CD8-positive, alpha-beta T cell (primary cell): ENCODE measurements at regions of chr4 and their contacts with region 1.

Region 1: GRCh38 chr4:107736924-107737448 is 17.0 kb upstream of the PAPSS1 start:
- DNase-seq: peak in 8 of 9 experiments; percentile 22 to 71 (median 46)
- ATAC-seq: peak; percentile 49
- H3K4me3 ChIP-seq: no peak overlapping the region
- H3K4me3 Mint-ChIP-seq: no peak overlapping the region
- H3K27ac ChIP-seq: no peak overlapping the region
- H3K27ac Mint-ChIP-seq: no peak overlapping the region
- H3K4me1 ChIP-seq: no peaks in the 10 kb centered on the region
- H3K4me1 Mint-ChIP-seq: no peaks in the 10 kb centered on the region
- H3K27me3 ChIP-seq: no peaks in the 10 kb centered on the region
- H3K27me3 Mint-ChIP-seq: peaks cover 2% of the 10 kb centered on the region
- CTCF ChIP-seq: peak; percentile 78

Region 2: GRCh38 chr4:106266201-106266600 is 1470.8 kb before region 1 on chr4:
- CTCF ChIA-PET with region 1: no interaction called
- POLR2A ChIA-PET with region 1: no interaction called
- intact Hi-C with region 1: loop called in 1 of 2 experiments (anchors 5 kb)
- DNase-seq: peak in 2 of 9 experiments; percentile 7 to 18
- ATAC-seq: no peak
- H3K4me3 ChIP-seq: no peak overlapping the region
- H3K4me3 Mint-ChIP-seq: no peak overlapping the region
- H3K27ac ChIP-seq: no peak overlapping the region
- H3K27ac Mint-ChIP-seq: no peak overlapping the region
- H3K4me1 ChIP-seq: no peaks in the 10 kb centered on the region
- H3K4me1 Mint-ChIP-seq: peaks cover 6% of the 10 kb centered on the region
- H3K27me3 ChIP-seq: no peaks in the 10 kb centered on the region
- H3K27me3 Mint-ChIP-seq: no peaks in the 10 kb centered on the region
- CTCF ChIP-seq: no peak

Region 3: DNA sequence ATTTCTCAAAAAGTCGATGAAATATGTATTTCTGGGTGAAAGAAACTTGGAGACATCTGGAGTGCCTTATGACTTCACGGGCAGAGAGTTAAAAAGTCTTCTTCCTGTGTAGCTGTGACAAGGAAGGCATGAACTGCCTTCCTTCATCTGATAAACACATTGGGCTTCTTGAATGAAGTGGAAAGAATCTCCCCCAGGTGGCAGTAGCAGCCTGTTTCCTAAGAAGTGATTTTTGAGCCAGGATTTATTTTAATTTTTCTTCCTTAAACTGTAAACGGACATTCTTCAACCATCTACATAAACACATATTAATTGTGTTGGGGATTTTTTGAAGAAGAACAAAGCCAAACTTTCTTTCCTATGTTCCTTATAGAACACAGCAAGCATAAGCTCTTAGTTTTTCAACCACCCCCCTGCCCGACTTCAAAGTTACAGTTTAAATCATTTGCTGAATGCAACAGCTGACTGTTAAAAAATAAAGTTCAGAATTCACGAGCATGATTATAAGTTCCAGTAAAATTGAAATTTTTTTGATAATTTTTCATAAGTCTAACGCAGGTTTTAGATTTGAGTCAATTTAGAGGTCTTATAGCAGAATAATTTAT is 1367.4 kb before region 1 on chr4:
- CTCF ChIA-PET with region 1: no interaction called
- POLR2A ChIA-PET with region 1: no interaction called
- intact Hi-C with region 1: loop called in 1 of 2 experiments (anchors 5 kb)
- DNase-seq: peak in 2 of 9 experiments; percentile 16 to 33
- ATAC-seq: no peak
- H3K4me3 ChIP-seq: no peak overlapping the region
- H3K4me3 Mint-ChIP-seq: no peak overlapping the region
- H3K27ac ChIP-seq: no peak overlapping the region
- H3K27ac Mint-ChIP-seq: no peak overlapping the region
- H3K4me1 ChIP-seq: no peaks in the 10 kb centered on the region
- H3K4me1 Mint-ChIP-seq: no peaks in the 10 kb centered on the region
- H3K27me3 ChIP-seq: no peaks in the 10 kb centered on the region
- H3K27me3 Mint-ChIP-seq: peaks cover 14% of the 10 kb centered on the region
- CTCF ChIP-seq: peak; percentile 27

Region 4: DNA sequence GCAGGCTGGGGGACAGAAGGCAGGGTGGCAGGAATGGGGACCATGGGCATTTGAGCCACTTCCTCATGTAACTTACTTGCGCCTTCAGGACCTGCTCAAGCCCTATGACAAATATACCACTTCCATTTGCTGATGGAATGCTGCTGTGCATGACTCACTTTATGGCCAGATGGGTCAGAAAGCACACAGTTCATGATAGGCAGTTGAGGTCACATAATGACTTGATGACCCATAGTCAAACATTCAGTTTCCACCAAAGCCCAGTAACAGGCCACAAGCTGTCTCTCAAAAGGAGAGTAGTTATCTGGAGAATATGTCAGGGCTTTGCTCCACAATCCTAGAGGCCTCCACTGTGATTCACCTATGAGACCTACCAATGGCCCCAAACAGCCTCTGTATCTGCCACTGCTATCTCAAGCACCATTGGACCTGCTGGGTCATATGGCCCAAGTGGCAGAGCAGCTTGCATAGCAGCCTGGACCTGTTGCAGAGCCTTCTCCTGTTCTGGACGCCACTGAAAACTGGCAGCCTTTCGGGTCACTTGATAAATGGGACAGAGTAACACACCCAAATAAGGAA is 11.6 kb before region 1 on chr4:
- CTCF ChIA-PET with region 1: interaction called, 15 read pairs
- POLR2A ChIA-PET with region 1: no interaction called
- intact Hi-C with region 1: loop called in 1 of 2 experiments (anchors 1 kb)
- DNase-seq: no peak
- ATAC-seq: no peak
- H3K4me3 ChIP-seq: no peak overlapping the region
- H3K4me3 Mint-ChIP-seq: no peak overlapping the region
- H3K27ac ChIP-seq: no peak overlapping the region
- H3K27ac Mint-ChIP-seq: no peak overlapping the region
- H3K4me1 ChIP-seq: peaks cover 5% of the 10 kb centered on the region
- H3K4me1 Mint-ChIP-seq: peaks cover 12% of the 10 kb centered on the region
- H3K27me3 ChIP-seq: no peaks in the 10 kb centered on the region
- H3K27me3 Mint-ChIP-seq: peaks cover 5% of the 10 kb centered on the region
- CTCF ChIP-seq: no peak

Region 5: DNA sequence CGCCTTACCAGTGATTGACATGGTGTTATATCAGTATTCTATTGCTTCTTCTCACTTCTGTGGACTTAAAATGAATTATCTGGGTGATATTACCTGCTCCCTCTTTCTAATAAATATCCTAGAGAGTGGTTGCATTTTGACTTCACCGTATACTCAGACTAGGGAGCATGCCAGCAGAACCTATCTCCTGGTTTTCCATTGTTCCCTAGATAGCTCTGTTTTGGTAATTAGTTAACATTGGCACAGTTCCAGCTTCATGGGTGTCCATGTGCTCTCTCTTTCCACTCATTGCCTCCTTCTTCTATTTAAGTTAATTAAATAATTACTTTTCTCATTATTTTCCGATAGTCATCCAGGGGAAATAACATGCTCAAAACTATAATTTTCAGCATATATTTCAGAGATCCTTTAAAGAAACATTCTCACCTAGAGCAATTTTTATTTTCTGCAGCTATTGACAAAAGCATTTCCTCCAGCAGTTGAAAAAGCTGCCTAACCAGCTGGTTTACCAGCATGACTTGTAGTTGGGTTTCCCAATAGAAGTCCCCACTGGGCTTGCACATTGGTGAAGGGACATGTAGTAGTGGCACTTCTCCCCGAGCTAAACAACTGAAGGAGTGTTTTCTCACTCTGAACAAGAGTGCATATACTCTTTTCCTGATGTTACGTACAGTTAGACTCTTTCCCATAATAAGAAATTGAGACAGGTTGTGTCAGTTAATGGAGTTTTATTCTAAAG is 10.9 kb after region 1 on chr4:
- CTCF ChIA-PET with region 1: interaction called, 22 read pairs
- POLR2A ChIA-PET with region 1: interaction called, 5 read pairs
- intact Hi-C with region 1: no loop called
- DNase-seq: no peak
- ATAC-seq: no peak
- H3K4me3 ChIP-seq: no peak overlapping the region
- H3K4me3 Mint-ChIP-seq: no peak overlapping the region
- H3K27ac ChIP-seq: no peak overlapping the region
- H3K27ac Mint-ChIP-seq: no peak overlapping the region
- H3K4me1 ChIP-seq: no peaks in the 10 kb centered on the region
- H3K4me1 Mint-ChIP-seq: no peaks in the 10 kb centered on the region
- H3K27me3 ChIP-seq: no peaks in the 10 kb centered on the region
- H3K27me3 Mint-ChIP-seq: peaks cover 34% of the 10 kb centered on the region
- CTCF ChIP-seq: no peak

Region 6: GRCh38 chr4:107757864-107758476 is 21.0 kb after region 1 on chr4:
- CTCF ChIA-PET with region 1: interaction called, 10 read pairs
- POLR2A ChIA-PET with region 1: interaction called, 3 read pairs
- intact Hi-C with region 1: no loop called
- DNase-seq: peak in 2 of 9 experiments; percentile 15 to 40
- ATAC-seq: no peak
- H3K4me3 ChIP-seq: no peak overlapping the region
- H3K4me3 Mint-ChIP-seq: no peak overlapping the region
- H3K27ac ChIP-seq: no peak overlapping the region
- H3K27ac Mint-ChIP-seq: no peak overlapping the region
- H3K4me1 ChIP-seq: no peaks in the 10 kb centered on the region
- H3K4me1 Mint-ChIP-seq: no peaks in the 10 kb centered on the region
- H3K27me3 ChIP-seq: no peaks in the 10 kb centered on the region
- H3K27me3 Mint-ChIP-seq: peaks cover 10% of the 10 kb centered on the region
- CTCF ChIP-seq: peak; percentile 76